ENCODE measurements at regions of chr1 and their contacts with region 1.

Region 1: DNA sequence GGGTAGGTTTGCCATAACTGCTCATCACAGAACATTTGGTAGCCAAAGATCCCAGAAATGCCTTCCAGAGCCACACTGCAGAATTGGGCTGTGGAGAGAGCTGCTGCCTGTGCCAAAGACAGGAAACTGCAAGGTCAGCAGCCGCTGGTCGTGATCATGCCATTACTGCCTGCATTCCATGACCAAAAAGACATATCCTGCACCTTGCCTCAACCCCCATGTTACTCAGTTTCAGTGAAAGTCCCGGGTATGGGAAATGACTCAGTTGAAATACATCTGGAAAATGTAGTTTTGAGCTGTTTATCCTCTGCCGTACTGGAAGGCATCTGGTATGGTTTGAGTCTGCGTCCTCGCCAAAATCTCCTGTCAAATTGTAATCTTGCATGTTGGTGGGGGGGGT is 161.7 kb downstream of the FCRL5 start:
- DNase-seq: peak; percentile 60
- H3K4me3 ChIP-seq: no peak overlapping the region
- H3K27ac ChIP-seq: no peak overlapping the region
- H3K4me1 ChIP-seq: peaks cover 16% of the 10 kb centered on the region
- H3K27me3 ChIP-seq: peaks cover 2% of the 10 kb centered on the region
- CTCF ChIP-seq: no peak

Region 2: GRCh38 chr1:156993446-156994147 is 397.1 kb before region 1 on chr1:
- CTCF ChIA-PET with region 1: no interaction called
- dilution Hi-C with region 1: no loop called
- in situ Hi-C with region 1: no loop called
- intact Hi-C with region 1: no loop called
- DNase-seq: peak; percentile 12
- H3K4me3 ChIP-seq: no peak overlapping the region
- H3K27ac ChIP-seq: no peak overlapping the region
- H3K4me1 ChIP-seq: peaks cover 16% of the 10 kb centered on the region
- H3K27me3 ChIP-seq: no peaks in the 10 kb centered on the region
- CTCF ChIP-seq: no peak

Region 3: DNA sequence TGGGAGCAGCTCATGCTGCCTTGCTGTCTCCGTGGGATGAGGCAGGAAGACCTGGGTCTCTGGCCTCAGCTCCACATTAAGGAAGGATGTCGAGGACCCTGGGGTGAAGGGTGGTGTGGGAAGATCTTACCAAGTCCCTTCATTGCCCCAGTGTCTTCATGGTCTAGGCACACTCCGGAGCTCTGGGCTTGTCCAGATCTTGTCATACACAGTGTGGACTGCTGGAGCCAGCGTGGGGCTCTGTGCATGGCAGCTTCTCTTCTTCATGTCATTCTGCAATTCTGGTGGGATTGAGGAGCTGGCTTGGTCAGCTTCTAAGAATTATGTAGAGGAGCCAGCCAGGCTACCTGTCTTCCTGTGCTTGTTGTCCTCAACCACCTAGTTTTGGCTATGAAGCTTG is 173.2 kb before region 1 on chr1:
- CTCF ChIA-PET with region 1: interaction called, 19 read pairs
- dilution Hi-C with region 1: no loop called
- in situ Hi-C with region 1: no loop called
- intact Hi-C with region 1: no loop called
- DNase-seq: no peak
- H3K4me3 ChIP-seq: no peak overlapping the region
- H3K27ac ChIP-seq: no peak overlapping the region
- H3K4me1 ChIP-seq: no peaks in the 10 kb centered on the region
- H3K27me3 ChIP-seq: peaks cover 3% of the 10 kb centered on the region
- CTCF ChIP-seq: no peak

Region 4: GRCh38 chr1:157403203-157403602 is 12.6 kb after region 1 on chr1:
- CTCF ChIA-PET with region 1: no interaction called
- dilution Hi-C with region 1: no loop called
- in situ Hi-C with region 1: no loop called
- intact Hi-C with region 1: no loop called
- DNase-seq: peak; percentile 23
- H3K4me3 ChIP-seq: no peak overlapping the region
- H3K27ac ChIP-seq: no peak overlapping the region
- H3K4me1 ChIP-seq: no peaks in the 10 kb centered on the region
- H3K27me3 ChIP-seq: no peaks in the 10 kb centered on the region
- CTCF ChIP-seq: no peak

Region 5: GRCh38 chr1:157482174-157482573 is 91.5 kb after region 1 on chr1:
- CTCF ChIA-PET with region 1: no interaction called
- dilution Hi-C with region 1: loop called (anchors 5 kb)
- in situ Hi-C with region 1: no loop called
- intact Hi-C with region 1: no loop called
- DNase-seq: peak; percentile 6
- H3K4me3 ChIP-seq: no peak overlapping the region
- H3K27ac ChIP-seq: no peak overlapping the region
- H3K4me1 ChIP-seq: no peaks in the 10 kb centered on the region
- H3K27me3 ChIP-seq: no peaks in the 10 kb centered on the region
- CTCF ChIP-seq: no peak